ENCODE measurements at regions of chr17 and their contacts with region 1.

Region 1: DNA sequence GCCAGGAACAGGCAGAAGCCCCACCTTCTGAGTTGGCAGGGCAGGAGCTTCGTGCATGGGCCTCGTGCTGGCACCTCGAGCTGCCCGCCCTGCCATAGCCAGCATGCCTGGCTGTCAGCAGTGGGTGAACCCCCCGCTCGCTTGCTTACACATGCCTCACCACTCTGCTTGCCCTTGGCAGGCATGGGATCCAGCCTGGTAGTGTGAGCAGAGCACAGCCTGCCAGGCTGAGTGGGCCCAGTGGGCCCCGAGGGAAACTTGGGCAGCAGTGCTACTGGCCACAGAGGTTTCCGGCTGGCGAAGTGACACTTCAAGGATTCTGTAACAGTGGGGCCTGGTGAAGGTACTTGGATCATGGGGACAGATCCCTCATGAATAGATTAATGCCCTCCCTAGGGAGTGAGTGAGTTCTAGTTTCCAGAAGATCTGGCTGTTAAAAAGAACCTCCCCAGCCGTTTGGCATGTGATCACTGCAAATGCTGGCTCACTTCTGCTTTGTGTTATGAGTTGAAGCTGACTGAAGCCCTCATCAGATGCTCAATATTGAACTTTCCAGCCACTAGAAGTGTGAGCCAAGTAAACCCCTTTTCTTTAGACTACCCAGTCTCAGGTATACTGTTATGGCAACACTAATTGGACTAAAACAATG is 114.7 kb downstream of the BCAS3 start:
- DNase-seq: no peak
- H3K4me3 ChIP-seq: no peak overlapping the region
- H3K4me3 Mint-ChIP-seq: no peak overlapping the region
- H3K27ac ChIP-seq: no peak overlapping the region
- H3K27ac Mint-ChIP-seq: no peak overlapping the region
- H3K4me1 ChIP-seq: no peaks in the 10 kb centered on the region
- H3K4me1 Mint-ChIP-seq: peaks cover 0 to 9% (median 7%) of the 10 kb centered on the region in 4 donors
- H3K27me3 ChIP-seq: no peaks in the 10 kb centered on the region
- H3K27me3 Mint-ChIP-seq: no peaks in the 10 kb centered on the region

Region 2: DNA sequence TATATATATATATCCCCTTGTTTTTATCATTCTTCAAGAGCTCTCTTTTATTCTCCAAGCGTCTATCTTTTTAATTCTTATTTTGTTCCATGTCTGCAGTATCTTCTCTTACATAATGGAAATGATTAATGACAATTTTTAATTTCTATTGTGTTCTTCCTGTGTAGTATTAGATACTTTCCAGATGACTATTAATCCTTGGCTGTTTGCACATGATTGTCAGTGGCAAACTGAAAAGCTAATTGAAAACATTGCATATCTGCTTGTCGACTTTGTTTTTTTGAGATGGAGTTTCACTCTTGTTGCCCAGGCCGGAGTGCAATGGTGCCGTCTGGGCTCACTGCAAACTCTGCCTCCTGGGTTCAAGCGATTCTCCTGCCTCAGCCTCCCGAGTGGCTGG is 10.0 kb after region 1 on chr17:
- CTCF ChIA-PET with region 1: no interaction called
- POLR2A ChIA-PET with region 1: no interaction called
- intact Hi-C with region 1: no loop called
- DNase-seq: no peak
- H3K4me3 ChIP-seq: no peak overlapping the region
- H3K4me3 Mint-ChIP-seq: no peak overlapping the region
- H3K27ac ChIP-seq: no peak overlapping the region
- H3K27ac Mint-ChIP-seq: no peak overlapping the region
- H3K4me1 ChIP-seq: no peaks in the 10 kb centered on the region
- H3K4me1 Mint-ChIP-seq: peaks cover 0 to 2% (median 0%) of the 10 kb centered on the region in 4 donors
- H3K27me3 ChIP-seq: no peaks in the 10 kb centered on the region
- H3K27me3 Mint-ChIP-seq: no peaks in the 10 kb centered on the region

Region 3: DNA sequence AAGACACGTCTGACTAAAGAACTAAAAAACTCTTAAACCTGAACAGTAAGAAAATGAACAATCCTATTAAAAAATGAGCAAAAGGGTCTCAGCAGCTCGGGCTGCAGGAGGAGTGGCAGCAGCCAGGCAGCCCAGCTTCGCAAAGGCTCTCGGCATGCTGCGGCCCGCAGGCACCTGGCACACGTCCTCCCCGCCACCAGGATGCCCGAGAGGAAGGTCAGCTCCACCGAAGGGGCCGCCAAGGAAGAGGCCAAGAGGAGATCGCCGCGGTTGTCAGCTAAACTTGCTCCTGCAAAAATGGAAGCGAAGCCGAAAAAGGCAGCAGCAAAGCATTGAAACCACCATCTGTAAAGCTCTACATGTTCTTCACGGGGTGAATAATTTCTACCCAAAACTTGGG is 58.8 kb after region 1 on chr17:
- CTCF ChIA-PET with region 1: no interaction called
- POLR2A ChIA-PET with region 1: no interaction called
- intact Hi-C with region 1: loop called (anchors 2 kb)
- DNase-seq: no peak
- H3K4me3 ChIP-seq: no peak overlapping the region
- H3K4me3 Mint-ChIP-seq: peak overlapping the region in 1 of 8 donors; percentile 14
- H3K27ac ChIP-seq: no peak overlapping the region
- H3K27ac Mint-ChIP-seq: peak overlapping the region in 1 of 7 donors; percentile 31
- H3K4me1 ChIP-seq: no peaks in the 10 kb centered on the region
- H3K4me1 Mint-ChIP-seq: peaks cover 0 to 2% (median 0%) of the 10 kb centered on the region in 4 donors
- H3K27me3 ChIP-seq: no peaks in the 10 kb centered on the region
- H3K27me3 Mint-ChIP-seq: no peaks in the 10 kb centered on the region

Region 4: DNA sequence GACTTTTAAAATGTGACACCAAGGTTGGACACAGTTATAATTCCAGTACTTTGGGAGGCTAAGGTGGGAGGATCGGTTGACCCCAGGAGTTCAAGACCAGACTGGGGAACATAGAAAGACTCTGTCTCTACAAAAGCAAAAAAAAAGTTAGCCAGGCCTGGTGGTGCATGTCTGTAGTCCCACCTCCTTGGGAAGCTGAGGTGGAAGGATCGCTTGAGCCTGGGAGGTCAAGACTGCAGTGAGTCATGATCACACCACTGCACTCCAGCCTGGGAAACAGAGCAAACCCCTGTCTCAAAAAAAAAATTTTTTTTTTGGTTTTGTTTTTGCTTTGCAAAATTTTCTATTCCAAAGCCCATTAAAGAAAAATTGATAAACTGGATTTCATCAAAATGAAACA is 166.6 kb after region 1 on chr17:
- CTCF ChIA-PET with region 1: no interaction called
- POLR2A ChIA-PET with region 1: no interaction called
- intact Hi-C with region 1: no loop called
- DNase-seq: no peak
- H3K4me3 ChIP-seq: no peak overlapping the region
- H3K4me3 Mint-ChIP-seq: no peak overlapping the region
- H3K27ac ChIP-seq: no peak overlapping the region
- H3K27ac Mint-ChIP-seq: no peak overlapping the region
- H3K4me1 ChIP-seq: no peaks in the 10 kb centered on the region
- H3K4me1 Mint-ChIP-seq: no peaks in the 10 kb centered on the region
- H3K27me3 ChIP-seq: no peaks in the 10 kb centered on the region
- H3K27me3 Mint-ChIP-seq: no peaks in the 10 kb centered on the region